H1 (cell line): ENCODE measurements at regions of chr17 and their contacts with region 1.

Region 1: DNA sequence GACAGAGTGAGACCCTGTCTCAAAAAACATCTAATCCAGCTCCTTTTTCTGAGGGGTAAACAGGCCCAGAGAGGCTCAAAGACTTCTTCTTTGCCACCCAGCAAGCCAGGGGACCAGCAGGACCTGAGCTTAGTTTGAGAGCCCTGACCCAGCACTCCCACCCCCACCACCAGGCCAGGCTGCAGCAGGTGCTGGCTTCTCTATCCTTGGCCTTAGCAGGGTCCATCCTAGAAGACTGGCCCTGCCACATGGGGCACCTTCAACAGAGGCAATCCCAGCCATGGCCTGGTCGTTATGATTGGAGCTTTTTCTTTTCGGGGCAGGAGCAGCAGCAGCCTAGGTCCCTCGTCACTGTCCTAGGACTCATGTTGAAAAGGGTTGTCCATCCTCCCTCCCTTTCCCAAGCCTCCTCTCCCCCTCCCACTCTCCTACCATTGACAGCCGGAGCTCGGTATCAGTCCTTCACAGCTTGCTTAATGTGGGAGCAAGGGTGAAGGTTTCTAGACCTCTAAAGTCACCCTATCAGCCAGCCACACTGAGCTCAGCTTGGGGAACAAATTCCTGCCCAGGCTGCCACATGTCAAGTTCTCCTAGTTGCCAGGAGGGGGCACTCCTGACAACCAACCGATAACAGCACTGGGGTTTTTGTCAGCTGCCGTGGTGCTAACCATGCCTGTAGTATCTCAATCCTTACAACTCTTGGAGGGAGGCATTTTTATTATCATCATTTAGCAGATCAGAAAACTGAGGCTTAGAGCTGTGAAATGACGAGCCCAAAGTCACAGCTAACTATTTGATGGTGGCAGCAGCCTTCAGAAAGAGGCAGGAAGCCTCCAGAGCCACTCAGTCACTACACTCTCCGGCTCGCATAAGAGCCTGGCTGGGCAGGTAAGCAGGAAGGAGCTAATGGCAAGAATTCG is 11.2 kb downstream of the MRPL27 start:
- DNase-seq: peak; percentile 34 to 67
- H3K4me3 ChIP-seq: no peak overlapping the region
- H3K27ac ChIP-seq: no peak overlapping the region
- H3K4me1 ChIP-seq: peaks cover 0 to 27% (median 11%) of the 10 kb centered on the region in 4 experiments; a peak in 6 of 7 replicates
- H3K27me3 ChIP-seq: no peaks in the 10 kb centered on the region
- CTCF ChIP-seq: peak; percentile 63 to 85 (median 79)
- EP300 ChIP-seq: no peak
- POLR2A ChIP-seq: no peak; a peak in 1 of 3 replicates
- RAD21 ChIP-seq: peak; percentile 53 to 65

Region 2: GRCh38 chr17:50269477-50270434 is 92.1 kb before region 1 on chr17:
- CTCF ChIA-PET with region 1: interaction called, 17 read pairs
- POLR2A ChIA-PET with region 1: no interaction called
- DNase-seq: peak in 1 of 2 experiments; percentile 86
- H3K4me3 ChIP-seq: 0 out of 8 replicates have a peak overlapping the region, but pooled peaks of 1 of the 4 experiments have one; percentile 5
- H3K27ac ChIP-seq: no peak overlapping the region
- H3K4me1 ChIP-seq: peaks cover 2 to 25% (median 21%) of the 10 kb centered on the region in 4 experiments
- H3K27me3 ChIP-seq: peaks cover 0 to 12% (median 5%) of the 10 kb centered on the region in 4 experiments; a peak in 4 of 7 replicates
- CTCF ChIP-seq: peak; percentile 76 to 96 (median 86)
- EP300 ChIP-seq: no peak
- POLR2A ChIP-seq: no peak
- RAD21 ChIP-seq: peak; percentile 80 to 87

Region 3: GRCh38 chr17:50345432-50346312 is 16.1 kb before region 1 on chr17 and contains the start of gene XYLT2:
- CTCF ChIA-PET with region 1: interaction called, 58 read pairs
- POLR2A ChIA-PET with region 1: interaction called, 135 read pairs
- DNase-seq: peak in 1 of 2 experiments; percentile 89
- H3K4me3 ChIP-seq: peak within 1 kb of the TSS; percentile 81 to 93 (median 88)
- H3K27ac ChIP-seq: peak within 1 kb of the TSS; percentile 80; the same call in 1 of the 2 replicates
- H3K4me1 ChIP-seq: peaks cover 4 to 17% (median 11%) of the 10 kb centered on the region in 4 experiments
- H3K27me3 ChIP-seq: peaks cover 0 to 9% (median 5%) of the 10 kb centered on the region in 4 experiments; a peak in 4 of 7 replicates
- CTCF ChIP-seq: no peak
- EP300 ChIP-seq: no peak
- POLR2A ChIP-seq: peak; percentile 51 to 60
- RAD21 ChIP-seq: no peak
- total RNA-seq, gene XYLT2: 28.0 and 28.9 TPM in 2 replicates

Region 4: GRCh38 chr17:50380369-50381259 is 18.8 kb after region 1 on chr17:
- CTCF ChIA-PET with region 1: interaction called, 51 read pairs
- POLR2A ChIA-PET with region 1: interaction called, 313 read pairs
- DNase-seq: no peak
- H3K4me3 ChIP-seq: no peak overlapping the region
- H3K27ac ChIP-seq: no peak overlapping the region
- H3K4me1 ChIP-seq: no peaks in the 10 kb centered on the region
- H3K27me3 ChIP-seq: no peaks in the 10 kb centered on the region
- CTCF ChIP-seq: peak in 2 of 3 experiments; percentile 13 to 14; a peak in 2 of 4 replicates
- EP300 ChIP-seq: no peak
- POLR2A ChIP-seq: peak in 1 of 2 experiments; percentile 50; a peak in 2 of 3 replicates
- RAD21 ChIP-seq: 0 out of 4 replicates have a peak, but pooled peaks have one; percentile 3 to 9

Region 5: GRCh38 chr17:50501054-50501453 is 139.2 kb after region 1 on chr17:
- CTCF ChIA-PET with region 1: interaction called, 11 read pairs
- POLR2A ChIA-PET with region 1: interaction called, 3 read pairs
- DNase-seq: no peak
- H3K4me3 ChIP-seq: no peak overlapping the region
- H3K27ac ChIP-seq: no peak overlapping the region
- H3K4me1 ChIP-seq: peaks cover 5 to 9% (median 6%) of the 10 kb centered on the region in 4 experiments; a peak in 6 of 7 replicates
- H3K27me3 ChIP-seq: no peaks in the 10 kb centered on the region
- CTCF ChIP-seq: peak in 2 of 3 experiments; percentile 11 to 43; a peak in 2 of 4 replicates
- EP300 ChIP-seq: no peak
- POLR2A ChIP-seq: no peak
- RAD21 ChIP-seq: 0 out of 4 replicates have a peak, but pooled peaks of 1 of the 2 experiments have one; percentile 13